ENCODE measurements at regions of chr15 and their contacts with region 1.

Region 1: DNA sequence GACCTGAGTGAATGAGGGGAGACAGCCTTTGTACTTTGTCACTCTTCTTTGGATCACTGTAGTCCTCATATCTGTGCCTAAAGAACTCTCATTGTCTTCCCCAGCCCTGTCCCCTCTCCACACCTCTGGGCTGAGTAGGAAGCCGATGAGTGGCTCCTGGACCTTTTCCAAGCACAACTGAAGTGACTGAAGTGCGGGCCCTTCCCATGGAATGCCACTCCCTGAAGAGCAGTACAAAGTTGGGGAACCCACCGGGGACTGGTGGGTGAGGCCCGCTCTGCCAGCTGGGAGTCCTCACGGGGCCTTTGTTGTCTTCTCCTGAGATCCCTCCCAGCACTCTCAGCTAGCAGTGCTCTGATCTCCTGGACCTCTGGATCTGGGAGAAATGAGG is 90.1 kb downstream of the AAGAB start:
- DNase-seq: no peak
- ATAC-seq: no peak
- H3K4me3 ChIP-seq: no peak overlapping the region
- H3K4me3 Mint-ChIP-seq: no peak overlapping the region
- H3K27ac ChIP-seq: no peak overlapping the region
- H3K27ac Mint-ChIP-seq: no peak overlapping the region
- H3K4me1 ChIP-seq: peaks cover 0 to 5% of the 10 kb centered on the region in 2 experiments
- H3K4me1 Mint-ChIP-seq: peaks cover 19 to 38% (median 20%) of the 10 kb centered on the region in 3 donors
- H3K27me3 ChIP-seq: no peaks in the 10 kb centered on the region
- H3K27me3 Mint-ChIP-seq: no peaks in the 10 kb centered on the region

Region 2: GRCh38 chr15:66898656-66899386 is 265.6 kb before region 1 on chr15:
- CTCF ChIA-PET with region 1: no interaction called
- POLR2A ChIA-PET with region 1: interaction called in 1 of 2 experiments, 13 read pairs
- DNase-seq: no peak
- ATAC-seq: no peak
- H3K4me3 ChIP-seq: no peak overlapping the region
- H3K4me3 Mint-ChIP-seq: no peak overlapping the region
- H3K27ac ChIP-seq: no peak overlapping the region
- H3K27ac Mint-ChIP-seq: no peak overlapping the region
- H3K4me1 ChIP-seq: peaks cover 0 to 3% of the 10 kb centered on the region in 2 experiments
- H3K4me1 Mint-ChIP-seq: peaks cover 1 to 10% (median 4%) of the 10 kb centered on the region in 3 donors
- H3K27me3 ChIP-seq: no peaks in the 10 kb centered on the region
- H3K27me3 Mint-ChIP-seq: peaks cover 3% of the 10 kb centered on the region in 2 donors

Region 3: DNA sequence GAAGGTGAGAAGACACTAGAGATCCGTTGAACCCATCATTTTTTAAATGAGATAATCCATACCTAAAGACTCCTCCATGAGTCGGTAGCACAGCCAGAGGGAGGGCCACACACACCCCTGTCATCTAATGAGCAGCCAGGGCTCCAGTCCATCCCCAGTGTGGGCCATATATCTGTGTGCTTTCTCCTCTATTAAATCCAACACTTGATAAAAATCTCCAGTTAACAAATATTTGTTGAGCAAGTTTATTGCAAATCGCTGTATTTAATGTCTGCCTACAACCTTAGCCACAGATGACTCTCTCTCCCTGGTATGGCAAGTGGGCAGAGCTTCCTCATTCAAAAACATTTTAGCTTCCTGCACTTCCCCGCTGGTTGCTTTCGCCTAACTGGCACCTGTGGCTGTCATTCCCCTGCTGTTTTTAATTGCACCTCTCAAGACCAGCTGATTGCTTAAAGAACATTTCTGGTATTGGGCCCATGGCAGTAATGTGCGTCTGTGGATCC is 16.1 kb before region 1 on chr15:
- CTCF ChIA-PET with region 1: no interaction called
- POLR2A ChIA-PET with region 1: interaction called, 3 to 11 read pairs
- DNase-seq: peak in 5 of 35 experiments; percentile 9 to 32 (median 23)
- ATAC-seq: peak in 3 of 4 experiments; percentile 42 to 53 (median 46)
- H3K4me3 ChIP-seq: no peak overlapping the region
- H3K4me3 Mint-ChIP-seq: peak overlapping the region; percentile 18 to 59 (median 37)
- H3K27ac ChIP-seq: peak overlapping the region; percentile 38
- H3K27ac Mint-ChIP-seq: peak overlapping the region; percentile 82 to 85
- H3K4me1 ChIP-seq: peaks cover 52 to 69% of the 10 kb centered on the region in 2 experiments
- H3K4me1 Mint-ChIP-seq: peaks cover 73 to 88% (median 83%) of the 10 kb centered on the region in 3 donors
- H3K27me3 ChIP-seq: no peaks in the 10 kb centered on the region
- H3K27me3 Mint-ChIP-seq: no peaks in the 10 kb centered on the region

Region 4: GRCh38 chr15:67196672-67197363 is 32.4 kb after region 1 on chr15:
- CTCF ChIA-PET with region 1: no interaction called
- POLR2A ChIA-PET with region 1: no interaction called
- DNase-seq: no peak
- ATAC-seq: no peak
- H3K4me3 ChIP-seq: no peak overlapping the region
- H3K4me3 Mint-ChIP-seq: no peak overlapping the region
- H3K27ac ChIP-seq: no peak overlapping the region
- H3K27ac Mint-ChIP-seq: peak overlapping the region in 1 of 2 donors; percentile 44
- H3K4me1 ChIP-seq: peaks cover 0 to 6% of the 10 kb centered on the region in 2 experiments
- H3K4me1 Mint-ChIP-seq: peaks cover 13 to 23% (median 22%) of the 10 kb centered on the region in 3 donors
- H3K27me3 ChIP-seq: no peaks in the 10 kb centered on the region
- H3K27me3 Mint-ChIP-seq: no peaks in the 10 kb centered on the region

Region 5: DNA sequence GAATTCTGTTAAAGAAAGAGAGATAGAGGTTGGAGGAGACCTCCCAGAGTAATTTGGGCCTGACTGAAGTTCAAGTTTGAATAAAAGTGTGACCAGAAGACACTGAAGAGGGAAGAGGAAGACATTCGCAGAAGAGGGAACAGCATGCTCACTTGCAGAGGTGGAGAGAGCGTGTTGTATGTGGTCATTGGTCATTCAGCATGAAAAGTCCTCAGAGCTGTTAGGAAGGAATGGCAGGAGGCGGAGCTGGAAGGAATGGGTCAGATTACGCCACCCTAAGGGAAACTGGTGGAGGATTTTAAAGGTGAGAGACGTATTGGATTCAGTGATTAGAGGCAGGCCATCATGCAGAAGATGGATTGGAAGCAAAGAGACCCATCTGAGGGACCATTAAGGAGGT is 131.8 kb after region 1 on chr15:
- CTCF ChIA-PET with region 1: no interaction called
- POLR2A ChIA-PET with region 1: no interaction called
- DNase-seq: no peak
- ATAC-seq: no peak
- H3K4me3 ChIP-seq: no peak overlapping the region
- H3K4me3 Mint-ChIP-seq: no peak overlapping the region
- H3K27ac ChIP-seq: no peak overlapping the region
- H3K27ac Mint-ChIP-seq: no peak overlapping the region
- H3K4me1 ChIP-seq: no peaks in the 10 kb centered on the region
- H3K4me1 Mint-ChIP-seq: no peaks in the 10 kb centered on the region
- H3K27me3 ChIP-seq: no peaks in the 10 kb centered on the region
- H3K27me3 Mint-ChIP-seq: no peaks in the 10 kb centered on the region

Measured in T-cell (primary cell).